ENCODE measurements at regions of chr5 and their contacts with region 1.

Region 1: DNA sequence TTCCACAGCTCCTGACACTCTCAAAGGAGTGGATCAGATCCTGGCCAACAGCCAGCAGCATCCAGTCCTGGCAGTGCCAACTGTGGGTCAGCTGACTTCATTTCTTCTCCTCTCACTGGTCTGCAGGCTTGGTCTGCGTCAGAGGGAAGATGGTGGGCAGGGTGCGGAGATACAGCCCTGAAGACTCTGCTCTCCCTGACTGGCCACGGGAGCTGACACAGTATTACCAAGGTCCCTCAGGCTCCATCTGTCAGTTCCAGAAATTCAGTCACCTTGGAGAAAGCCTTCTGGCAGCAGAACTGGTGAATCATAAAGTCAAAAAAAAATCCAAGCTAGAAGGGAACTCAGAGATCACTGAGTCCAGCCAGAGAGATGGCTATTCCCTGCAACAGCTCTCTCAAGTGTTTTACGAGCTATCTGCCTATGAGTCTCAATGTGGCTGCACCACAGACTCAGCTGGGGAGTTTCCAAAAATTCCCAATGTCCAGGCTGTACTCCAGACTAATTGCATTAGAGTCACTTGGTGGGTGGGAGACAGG is 28.0 kb downstream of the C1QTNF2 start:
- DNase-seq: no peak
- ATAC-seq: no peak
- H3K4me3 ChIP-seq: no peak overlapping the region
- H3K27ac ChIP-seq: no peak overlapping the region
- H3K4me1 ChIP-seq: no peaks in the 10 kb centered on the region
- H3K27me3 ChIP-seq: no peaks in the 10 kb centered on the region
- CTCF ChIP-seq: no peak
- POLR2A ChIP-seq: no peak

Region 2: DNA sequence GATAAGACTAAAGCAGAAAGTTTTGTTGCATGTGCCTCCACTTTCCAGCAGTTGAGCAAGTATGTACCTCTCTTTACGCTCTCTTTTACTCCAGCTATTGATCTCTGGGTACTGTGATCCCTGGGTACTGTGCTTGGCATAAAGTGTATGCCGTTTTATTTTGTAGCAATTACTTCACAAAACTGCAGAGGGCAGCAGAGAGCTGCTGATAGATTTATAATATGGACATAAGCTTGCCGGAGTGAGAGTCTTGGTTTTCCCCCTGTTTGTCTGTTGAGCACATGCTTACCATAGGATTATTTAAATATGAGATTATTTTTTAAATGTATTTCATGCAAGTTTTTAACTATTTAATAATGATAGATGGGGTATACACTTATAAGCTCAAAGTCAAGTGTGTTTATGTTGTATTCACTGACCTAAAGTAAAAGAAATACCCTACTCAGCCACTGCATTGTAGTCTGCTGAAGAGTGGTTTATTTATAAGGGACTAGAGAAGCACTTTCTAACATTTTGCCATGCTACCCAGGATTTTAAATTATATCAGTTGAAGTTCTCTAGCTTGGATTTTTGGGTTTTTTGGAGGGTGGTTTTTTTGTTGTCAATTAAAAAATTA is 320.5 kb before region 1 on chr5:
- intact Hi-C with region 1: loop called in 1 of 2 experiments (anchors 10 kb)
- DNase-seq: peak in 1 of 3 donors; percentile 58
- ATAC-seq: peak; percentile 97 to 99 (median 98)
- H3K4me3 ChIP-seq: no peak overlapping the region
- H3K27ac ChIP-seq: no peak overlapping the region
- H3K4me1 ChIP-seq: peaks cover 0 to 22% (median 3%) of the 10 kb centered on the region in 4 donors
- H3K27me3 ChIP-seq: no peaks in the 10 kb centered on the region
- CTCF ChIP-seq: peak; percentile 71 to 90 (median 84)
- POLR2A ChIP-seq: no peak

Region 3: DNA sequence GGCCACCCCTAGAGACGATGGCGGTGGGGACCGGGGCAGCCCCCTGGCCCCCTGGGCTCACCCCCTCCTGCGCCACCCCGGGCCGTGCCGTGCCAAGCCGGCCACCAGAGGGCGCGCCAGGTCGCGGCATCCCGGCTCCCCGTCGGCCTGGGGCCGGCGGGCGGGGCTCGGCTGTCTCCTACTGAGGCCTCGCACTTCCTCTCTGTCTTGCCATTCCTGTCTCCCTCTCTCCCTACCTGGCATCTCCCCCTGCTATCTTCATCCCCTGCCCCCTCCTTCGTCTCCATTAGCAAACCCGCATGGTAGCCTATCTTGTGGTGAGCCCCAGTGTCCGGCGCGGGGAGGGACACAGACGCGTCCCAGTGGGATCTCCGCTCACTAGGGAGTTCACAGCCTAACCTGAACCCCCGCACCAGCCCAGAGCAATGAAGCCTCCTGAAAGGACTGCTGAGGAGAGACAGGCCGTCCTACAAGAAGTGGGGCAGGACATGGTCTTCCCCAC is 143.0 kb before region 1 on chr5:
- intact Hi-C with region 1: loop called (anchors 5 kb)
- DNase-seq: peak; percentile 66 to 77 (median 76)
- ATAC-seq: peak; percentile 90 to 96 (median 93)
- H3K4me3 ChIP-seq: peak overlapping the region; percentile 14 to 37 (median 32)
- H3K27ac ChIP-seq: no peak overlapping the region
- H3K4me1 ChIP-seq: peaks cover 0 to 8% (median 0%) of the 10 kb centered on the region in 4 donors
- H3K27me3 ChIP-seq: no peaks in the 10 kb centered on the region
- CTCF ChIP-seq: peak; percentile 84 to 98 (median 96)
- POLR2A ChIP-seq: no peak